ENCODE measurements at regions of chr16 and their contacts with region 1.

Region 1: DNA sequence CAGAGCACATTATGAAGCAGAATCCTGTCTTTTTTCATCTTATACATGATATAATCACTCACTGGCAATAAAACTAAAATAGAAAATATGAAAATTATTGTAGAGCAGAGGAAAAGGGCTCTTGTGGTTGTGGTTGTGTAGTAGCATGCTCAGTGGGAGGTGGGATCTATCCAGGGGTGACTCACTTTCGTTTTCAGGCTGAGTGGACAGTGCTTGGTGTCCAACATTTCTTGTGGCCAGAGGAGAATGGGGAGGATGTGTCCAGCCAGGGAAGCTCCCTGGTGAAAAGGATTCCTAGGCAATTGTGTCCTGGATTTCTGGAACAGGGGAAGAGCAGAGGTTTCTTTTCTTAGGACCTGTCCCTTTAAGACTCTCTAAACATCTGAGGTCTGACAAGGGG is 31.9 kb upstream of the CPHXL start:
- DNase-seq: no peak
- H3K4me3 ChIP-seq: no peak overlapping the region
- H3K27ac ChIP-seq: no peak overlapping the region
- H3K4me1 ChIP-seq: no peaks in the 10 kb centered on the region
- H3K27me3 ChIP-seq: no peaks in the 10 kb centered on the region
- CTCF ChIP-seq: no peak
- POLR2A ChIP-seq: no peak

Region 2: DNA sequence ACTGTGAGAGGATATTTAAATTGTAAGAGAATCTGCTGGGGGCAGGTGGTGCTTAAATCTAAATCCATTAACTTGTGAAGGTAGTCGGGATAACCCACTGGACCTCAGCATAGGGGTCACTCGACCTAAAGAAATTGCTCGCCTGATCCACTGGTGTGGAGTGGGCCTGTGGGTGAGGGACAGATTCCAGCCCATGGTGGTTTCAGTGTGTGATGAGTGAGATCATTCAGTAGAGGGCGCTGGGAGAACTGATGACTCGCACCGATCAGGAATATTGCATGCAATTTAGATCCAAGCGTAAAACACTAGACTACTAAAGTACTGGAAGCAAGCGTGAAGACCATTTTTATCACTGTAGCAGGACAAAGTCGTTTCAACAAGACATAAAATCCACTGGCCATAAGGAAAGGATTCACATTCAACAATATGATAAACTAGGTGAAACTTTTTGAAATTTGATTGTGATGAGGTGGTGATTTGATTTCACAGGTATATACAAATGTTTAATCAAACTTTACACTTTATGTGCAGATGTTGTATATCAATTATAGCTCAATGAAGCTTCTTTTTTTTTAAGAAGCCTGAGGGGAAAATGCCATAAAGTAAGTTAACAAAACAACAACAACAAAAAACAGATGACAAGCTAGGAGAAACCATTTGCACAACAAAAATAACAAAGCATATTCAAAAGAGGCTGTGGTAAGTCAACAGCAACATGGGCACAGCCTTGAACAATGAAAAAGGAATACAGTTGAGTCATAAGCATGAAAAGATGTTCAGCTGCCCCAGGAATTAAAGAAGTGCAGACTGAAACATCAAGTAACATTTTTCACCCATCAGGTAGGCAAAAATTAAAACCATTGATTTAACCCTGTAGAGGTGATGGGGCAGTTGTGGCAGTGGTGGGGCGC is 286.2 kb before region 1 on chr16:
- intact Hi-C with region 1: loop called (anchors 10 kb)
- DNase-seq: peak; percentile 53 to 61
- H3K4me3 ChIP-seq: no peak overlapping the region
- H3K27ac ChIP-seq: no peak overlapping the region
- H3K4me1 ChIP-seq: no peaks in the 10 kb centered on the region
- H3K27me3 ChIP-seq: no peaks in the 10 kb centered on the region
- CTCF ChIP-seq: peak; percentile 69 to 80 (median 73)
- POLR2A ChIP-seq: no peak

Region 3: DNA sequence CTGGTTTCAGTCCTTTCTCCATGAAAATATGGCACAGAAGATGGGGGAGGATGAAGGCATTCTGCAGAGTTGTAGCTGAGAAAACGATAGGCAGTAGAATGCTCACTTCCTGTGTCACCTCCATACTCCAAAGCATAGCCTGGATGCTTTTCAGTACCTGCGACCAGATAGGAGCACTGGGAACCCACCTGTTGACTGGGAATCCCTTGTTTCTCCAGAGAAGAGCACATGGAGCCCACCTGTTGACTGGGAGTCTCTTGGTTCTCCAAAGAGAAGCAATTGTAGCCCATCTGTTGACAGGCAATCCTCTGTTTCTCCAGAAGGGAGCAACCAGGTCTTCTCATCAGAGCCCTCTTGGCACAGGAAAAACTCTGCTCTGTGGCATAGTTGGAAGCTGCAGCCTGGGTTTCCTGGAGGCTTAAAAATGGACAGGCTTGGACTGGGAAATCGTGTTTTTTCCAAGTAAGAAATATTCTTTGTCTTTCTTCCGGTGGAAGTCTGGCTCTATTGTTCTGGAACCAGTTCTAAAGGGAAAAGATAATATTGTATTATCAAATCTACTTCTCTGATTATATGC is 97.4 kb before region 1 on chr16:
- intact Hi-C with region 1: no loop called
- DNase-seq: no peak
- H3K4me3 ChIP-seq: no peak overlapping the region
- H3K27ac ChIP-seq: no peak overlapping the region
- H3K4me1 ChIP-seq: no peaks in the 10 kb centered on the region
- H3K27me3 ChIP-seq: no peaks in the 10 kb centered on the region
- CTCF ChIP-seq: no peak
- POLR2A ChIP-seq: no peak

Region 4: GRCh38 chr16:75703306-75703705 is 54.9 kb before region 1 on chr16:
- intact Hi-C with region 1: no loop called
- DNase-seq: no peak
- H3K4me3 ChIP-seq: no peak overlapping the region
- H3K27ac ChIP-seq: no peak overlapping the region
- H3K4me1 ChIP-seq: no peaks in the 10 kb centered on the region
- H3K27me3 ChIP-seq: no peaks in the 10 kb centered on the region
- CTCF ChIP-seq: no peak
- POLR2A ChIP-seq: no peak